Activated naive CD4-positive, alpha-beta T cell treated with anti-CD3 and anti-CD28 coated beads for 36 hours (primary cell): ENCODE measurements at regions of chr1 and their contacts with region 1.

Region 1: GRCh38 chr1:200888349-200888838 is 6.3 kb upstream of the INAVA start:
- DNase-seq: peak; percentile 85
- H3K4me3 Mint-ChIP-seq: no peak overlapping the region
- H3K27ac Mint-ChIP-seq: no peak overlapping the region
- H3K4me1 Mint-ChIP-seq: peaks cover 46% of the 10 kb centered on the region
- H3K27me3 Mint-ChIP-seq: peaks cover 25% of the 10 kb centered on the region

Region 2: DNA sequence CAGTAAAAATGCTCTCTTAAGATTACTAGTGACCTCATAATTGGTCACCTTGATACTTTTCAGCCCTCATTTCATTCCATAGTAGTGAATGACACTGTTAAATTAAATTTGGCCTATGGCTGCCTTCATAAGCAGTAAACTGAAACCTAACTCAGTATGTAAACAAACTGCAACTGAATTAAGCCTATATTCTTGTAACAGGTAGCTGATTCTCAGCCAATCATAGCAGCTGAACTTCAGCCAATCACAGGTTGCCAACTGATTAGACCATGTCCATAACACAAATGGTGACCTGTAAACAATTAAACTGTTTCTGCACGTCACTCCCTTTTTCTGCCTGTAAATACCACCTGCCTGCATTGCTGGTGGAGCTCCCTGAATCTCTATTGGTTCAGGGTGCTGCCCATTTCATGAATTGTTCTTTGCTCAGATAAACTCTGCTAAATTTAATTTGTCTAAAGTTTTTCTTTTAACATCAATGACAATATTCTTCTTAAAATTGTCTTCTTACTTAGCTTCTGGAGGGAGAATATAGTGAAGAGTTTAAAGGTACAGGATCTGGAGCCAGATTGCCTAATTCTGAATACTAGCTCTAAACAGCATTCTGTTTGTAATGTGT is 173.7 kb before region 1 on chr1:
- CTCF ChIA-PET with region 1: no interaction called
- intact Hi-C with region 1: no loop called
- DNase-seq: no peak
- H3K4me3 Mint-ChIP-seq: no peak overlapping the region
- H3K27ac Mint-ChIP-seq: no peak overlapping the region
- H3K4me1 Mint-ChIP-seq: no peaks in the 10 kb centered on the region
- H3K27me3 Mint-ChIP-seq: peaks cover 1% of the 10 kb centered on the region

Region 3: GRCh38 chr1:200811704-200812103 is 76.7 kb before region 1 on chr1:
- CTCF ChIA-PET with region 1: no interaction called
- intact Hi-C with region 1: no loop called
- DNase-seq: no peak
- H3K4me3 Mint-ChIP-seq: no peak overlapping the region
- H3K27ac Mint-ChIP-seq: no peak overlapping the region
- H3K4me1 Mint-ChIP-seq: no peaks in the 10 kb centered on the region
- H3K27me3 Mint-ChIP-seq: no peaks in the 10 kb centered on the region

Region 4: DNA sequence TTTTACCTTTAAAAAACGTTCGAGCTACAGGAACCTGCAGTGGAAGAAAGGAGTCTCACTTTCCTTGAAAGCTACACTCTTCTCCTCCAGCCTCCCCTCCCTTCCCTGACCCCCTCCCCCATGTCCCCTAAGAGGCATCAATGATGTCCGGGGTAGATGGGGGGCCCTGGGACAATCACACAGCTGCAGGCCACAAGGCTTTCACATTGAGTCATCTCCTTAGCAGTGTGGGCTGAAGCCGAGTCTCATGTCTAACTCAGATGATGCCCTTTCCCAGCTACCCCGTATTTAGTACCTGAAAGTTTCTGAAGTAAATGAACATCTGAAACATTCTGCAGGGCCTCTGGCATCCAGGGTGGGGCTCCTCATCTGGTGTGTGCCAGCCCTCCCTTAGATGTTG is 21.9 kb before region 1 on chr1:
- CTCF ChIA-PET with region 1: interaction called, 4 read pairs
- intact Hi-C with region 1: loop called (anchors 1 kb)
- DNase-seq: peak; percentile 71
- H3K4me3 Mint-ChIP-seq: no peak overlapping the region
- H3K27ac Mint-ChIP-seq: no peak overlapping the region
- H3K4me1 Mint-ChIP-seq: peaks cover 40% of the 10 kb centered on the region
- H3K27me3 Mint-ChIP-seq: peaks cover 12% of the 10 kb centered on the region

Region 5: DNA sequence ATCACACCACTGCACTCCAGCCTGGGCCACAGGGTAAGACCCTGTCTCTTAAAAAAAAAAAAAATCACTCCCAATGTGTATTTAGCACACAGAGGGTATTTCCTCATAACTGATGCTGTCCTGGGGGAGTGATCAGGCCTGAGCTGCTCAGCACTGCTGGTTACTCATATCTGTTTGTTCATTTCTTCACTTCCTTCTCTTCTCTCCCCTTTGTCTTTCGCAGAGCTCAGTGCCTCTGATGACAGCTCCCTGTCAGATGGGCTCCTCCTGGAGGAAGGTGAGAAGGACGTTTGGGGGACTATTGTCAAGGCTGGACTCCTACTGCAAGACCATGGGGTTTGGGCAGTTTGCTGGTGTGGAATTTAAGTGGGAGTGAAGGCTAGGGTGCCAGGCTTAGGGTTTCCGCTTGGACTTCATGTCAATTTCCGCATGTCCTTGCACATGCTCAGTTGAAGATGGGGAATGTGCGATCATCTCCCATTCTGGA is 19.3 kb after region 1 on chr1:
- CTCF ChIA-PET with region 1: interaction called, 8 read pairs
- intact Hi-C with region 1: loop called (anchors 1 kb)
- DNase-seq: no peak
- H3K4me3 Mint-ChIP-seq: no peak overlapping the region
- H3K27ac Mint-ChIP-seq: no peak overlapping the region
- H3K4me1 Mint-ChIP-seq: peaks cover 12% of the 10 kb centered on the region
- H3K27me3 Mint-ChIP-seq: peaks cover 2% of the 10 kb centered on the region

Region 6: DNA sequence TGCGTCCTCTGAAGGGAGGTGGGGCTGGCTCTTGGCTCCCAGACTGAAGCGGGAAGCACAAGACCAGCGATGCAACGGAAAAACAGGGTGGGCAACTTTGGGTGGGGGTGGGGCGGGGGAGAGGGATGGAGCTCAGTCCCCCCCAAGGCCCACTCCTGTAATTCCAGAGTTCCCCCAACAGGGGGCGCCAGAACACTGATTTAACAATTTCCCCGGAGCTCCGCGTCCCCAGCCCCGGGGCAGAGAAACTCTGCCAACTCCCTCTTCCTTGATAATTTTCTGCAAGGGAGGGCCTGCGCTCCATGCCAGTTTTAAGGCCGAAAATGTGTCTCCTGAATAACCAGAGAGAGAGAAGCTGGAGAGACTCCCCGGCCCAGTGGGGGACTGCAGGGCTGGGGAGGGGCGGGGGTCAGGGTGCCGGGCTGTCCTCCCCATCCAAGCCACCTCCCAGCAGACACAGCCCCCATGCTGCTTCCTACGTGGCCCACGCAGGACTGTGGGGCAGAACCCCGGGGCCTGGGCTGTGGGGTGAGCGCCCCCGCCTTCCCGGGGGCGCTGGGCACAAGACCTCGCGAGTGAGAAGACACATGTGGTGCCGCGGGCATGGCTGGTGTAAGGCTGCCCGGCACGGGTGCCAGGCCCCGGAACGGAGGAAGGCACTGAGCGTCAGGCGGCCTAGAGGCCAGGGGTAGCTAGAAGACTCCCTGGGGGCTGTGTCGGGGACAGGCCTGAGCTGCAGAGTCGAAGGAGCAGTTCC is 83.7 kb after region 1 on chr1:
- CTCF ChIA-PET with region 1: interaction called, 3 read pairs
- intact Hi-C with region 1: loop called (anchors 2 kb)
- DNase-seq: peak; percentile 76
- H3K4me3 Mint-ChIP-seq: no peak overlapping the region
- H3K27ac Mint-ChIP-seq: no peak overlapping the region
- H3K4me1 Mint-ChIP-seq: peaks cover 4% of the 10 kb centered on the region
- H3K27me3 Mint-ChIP-seq: no peaks in the 10 kb centered on the region

Region 7: GRCh38 chr1:201053158-201053860 is 164.9 kb after region 1 on chr1:
- CTCF ChIA-PET with region 1: no interaction called
- intact Hi-C with region 1: loop called (anchors 1 kb)
- DNase-seq: no peak
- H3K4me3 Mint-ChIP-seq: no peak overlapping the region
- H3K27ac Mint-ChIP-seq: no peak overlapping the region
- H3K4me1 Mint-ChIP-seq: peaks cover 13% of the 10 kb centered on the region
- H3K27me3 Mint-ChIP-seq: no peaks in the 10 kb centered on the region

Region 8: GRCh38 chr1:201170533-201171062 is 282.2 kb after region 1 on chr1:
- CTCF ChIA-PET with region 1: no interaction called
- intact Hi-C with region 1: loop called (anchors 2 kb)
- DNase-seq: peak; percentile 93
- H3K4me3 Mint-ChIP-seq: peak overlapping the region; percentile 76
- H3K27ac Mint-ChIP-seq: peak overlapping the region; percentile 85
- H3K4me1 Mint-ChIP-seq: peaks cover 21% of the 10 kb centered on the region
- H3K27me3 Mint-ChIP-seq: peaks cover 2% of the 10 kb centered on the region